ENCODE measurements at regions of chr19 and their contacts with region 1.

Region 1: GRCh38 chr19:44808463-44809371 is at the start of gene BCAM:
- DNase-seq: peak; percentile 53 to 93
- ATAC-seq: peak; percentile 52 to 72
- H3K4me3 ChIP-seq: peak within 1 kb of the TSS; percentile 69
- H3K27ac ChIP-seq: peak within 1 kb of the TSS; percentile 88 to 89
- H3K4me1 ChIP-seq: peaks cover 35% of the 10 kb centered on the region
- CTCF ChIP-seq: no peak
- EP300 ChIP-seq: no peak
- POLR2A ChIP-seq: peak; percentile 76
- RAD21 ChIP-seq: no peak
- polyA plus RNA-seq, gene BCAM: 15.2 and 18.4 TPM in 2 replicates

Region 2: DNA sequence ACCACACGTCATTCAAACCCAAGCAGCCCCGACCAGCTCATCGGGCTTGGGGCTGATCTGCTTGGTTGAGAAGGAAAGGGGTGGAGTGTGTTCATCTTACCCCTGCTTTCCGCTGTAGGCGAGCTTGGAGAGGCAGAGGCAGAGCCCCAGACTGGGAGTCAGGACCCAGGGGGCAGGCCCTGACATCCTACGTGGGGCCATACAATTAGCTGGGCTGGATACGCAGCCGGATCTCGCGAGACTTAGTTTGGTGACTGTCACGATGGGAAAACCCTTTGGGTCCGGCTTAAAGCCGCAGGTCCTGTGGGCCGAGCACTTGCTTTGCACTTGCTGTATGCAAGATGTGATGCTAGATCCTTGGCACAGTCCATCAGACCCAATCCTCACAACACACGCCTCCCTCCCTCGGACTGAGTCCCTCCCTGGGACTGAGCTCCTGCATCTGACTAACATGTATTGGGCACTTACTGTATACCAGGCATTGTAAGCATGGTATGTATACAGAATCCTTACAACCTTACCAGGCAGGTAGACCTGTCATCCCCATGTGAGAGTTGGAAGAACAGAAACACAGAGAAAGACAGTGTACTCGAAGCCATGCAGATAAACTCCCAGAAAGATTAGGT is 106.1 kb before region 1 on chr19:
- CTCF ChIA-PET with region 1: interaction called, 12 read pairs
- POLR2A ChIA-PET with region 1: no interaction called
- DNase-seq: no peak
- ATAC-seq: no peak; a peak in 1 of 6 replicates
- H3K4me3 ChIP-seq: no peak overlapping the region
- H3K27ac ChIP-seq: peak overlapping the region in 1 of 2 experiments; percentile 71; a peak in 3 of 6 replicates
- H3K4me1 ChIP-seq: no peaks in the 10 kb centered on the region
- CTCF ChIP-seq: no peak
- EP300 ChIP-seq: no peak
- POLR2A ChIP-seq: no peak
- RAD21 ChIP-seq: no peak

Region 3: DNA sequence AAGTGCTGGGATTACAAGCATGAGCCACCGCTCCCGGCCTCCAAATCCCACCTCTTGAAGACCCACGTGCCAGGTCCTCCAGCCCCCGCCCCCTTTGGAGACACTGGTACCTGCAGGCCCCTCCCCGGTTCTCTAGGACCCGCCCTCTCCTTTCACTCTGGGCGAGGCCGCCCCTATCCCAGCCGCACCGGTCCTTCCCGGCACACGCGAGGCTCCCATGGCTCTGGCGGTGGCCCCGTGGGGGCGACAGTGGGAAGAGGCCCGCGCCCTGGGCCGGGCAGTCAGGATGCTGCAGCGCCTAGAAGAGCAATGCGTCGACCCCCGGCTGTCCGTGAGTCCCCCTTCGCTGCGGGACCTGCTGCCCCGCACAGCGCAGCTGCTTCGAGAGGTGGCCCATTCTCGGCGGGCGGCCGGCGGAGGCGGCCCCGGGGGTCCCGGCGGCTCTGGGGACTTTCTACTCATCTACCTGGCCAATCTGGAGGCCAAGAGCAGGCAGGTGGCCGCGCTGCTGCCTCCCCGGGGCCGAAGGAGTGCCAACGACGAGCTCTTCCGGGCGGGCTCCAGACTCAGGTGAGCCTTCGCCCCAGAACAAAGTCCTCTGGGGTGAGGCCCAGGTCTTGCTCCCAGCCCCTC is 30.9 kb before region 1 on chr19 and contains the start of gene CBLC:
- CTCF ChIA-PET with region 1: interaction called, 157 read pairs
- POLR2A ChIA-PET with region 1: no interaction called
- DNase-seq: peak in 1 of 2 experiments; percentile 60
- ATAC-seq: peak; percentile 19 to 59; a peak in 4 of 6 replicates
- H3K4me3 ChIP-seq: no peak within 1 kb of the TSS
- H3K27ac ChIP-seq: peak within 1 kb of the TSS in 1 of 2 experiments; percentile 88; a peak in 3 of 6 replicates
- H3K4me1 ChIP-seq: peaks cover 33% of the 10 kb centered on the region
- CTCF ChIP-seq: no peak
- EP300 ChIP-seq: no peak
- POLR2A ChIP-seq: no peak
- RAD21 ChIP-seq: no peak
- polyA plus RNA-seq, gene CBLC: not detected in 2 replicates

Region 4: DNA sequence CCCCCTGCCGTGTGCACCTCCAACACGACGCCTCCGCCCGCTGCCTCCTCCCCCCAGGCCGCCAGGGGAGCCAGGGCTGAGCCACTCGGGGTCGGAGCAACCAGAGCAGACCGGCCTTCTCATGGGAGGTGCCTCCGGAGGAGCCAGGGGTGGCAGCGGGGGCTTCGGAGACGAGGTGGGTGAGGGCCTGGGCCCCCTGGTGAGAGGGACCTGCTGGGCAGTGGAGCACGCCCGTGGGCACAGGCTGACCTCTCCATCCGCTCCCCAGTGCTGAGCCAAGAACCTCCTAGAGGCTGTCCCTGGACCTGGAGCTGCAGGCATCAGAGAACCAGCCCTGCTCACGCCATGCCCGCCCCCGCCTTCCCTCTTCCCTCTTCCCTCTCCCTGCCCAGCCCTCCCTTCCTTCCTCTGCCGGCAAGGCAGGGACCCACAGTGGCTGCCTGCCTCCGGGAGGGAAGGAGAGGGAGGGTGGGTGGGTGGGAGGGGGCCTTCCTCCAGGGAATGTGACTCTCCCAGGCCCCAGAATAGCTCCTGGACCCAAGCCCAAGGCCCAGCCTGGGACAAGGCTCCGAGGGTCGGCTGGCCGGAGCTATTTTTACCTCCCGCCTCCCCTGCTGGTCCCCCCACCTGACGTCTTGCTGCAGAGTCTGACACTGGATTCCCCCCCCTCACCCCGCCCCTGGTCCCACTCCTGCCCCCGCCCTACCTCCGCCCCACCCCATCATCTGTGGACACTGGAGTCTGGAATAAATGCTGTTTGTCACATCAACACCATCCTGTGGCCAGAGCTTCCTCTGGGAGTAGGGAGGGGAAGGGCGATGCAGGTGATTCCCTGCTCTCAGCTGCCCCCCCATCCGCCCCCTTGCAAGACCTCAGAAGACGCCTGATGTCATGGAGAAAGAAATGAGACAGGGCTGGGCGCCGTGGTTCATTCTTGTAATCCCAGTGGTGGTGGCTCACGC is 12.2 kb after region 1 on chr19:
- CTCF ChIA-PET with region 1: interaction called, 25 read pairs
- POLR2A ChIA-PET with region 1: interaction called, 6 read pairs
- DNase-seq: no peak
- ATAC-seq: peak in 1 of 2 experiments; percentile 38; a peak in 3 of 6 replicates
- H3K4me3 ChIP-seq: no peak overlapping the region
- H3K27ac ChIP-seq: no peak overlapping the region
- H3K4me1 ChIP-seq: peaks cover 12% of the 10 kb centered on the region; the same call in 2 of the 3 replicates
- CTCF ChIP-seq: no peak
- EP300 ChIP-seq: no peak
- POLR2A ChIP-seq: no peak
- RAD21 ChIP-seq: no peak